CD4-positive, alpha-beta T cell (primary cell): ENCODE measurements at regions of chr2 and their contacts with region 1.

Region 1: DNA sequence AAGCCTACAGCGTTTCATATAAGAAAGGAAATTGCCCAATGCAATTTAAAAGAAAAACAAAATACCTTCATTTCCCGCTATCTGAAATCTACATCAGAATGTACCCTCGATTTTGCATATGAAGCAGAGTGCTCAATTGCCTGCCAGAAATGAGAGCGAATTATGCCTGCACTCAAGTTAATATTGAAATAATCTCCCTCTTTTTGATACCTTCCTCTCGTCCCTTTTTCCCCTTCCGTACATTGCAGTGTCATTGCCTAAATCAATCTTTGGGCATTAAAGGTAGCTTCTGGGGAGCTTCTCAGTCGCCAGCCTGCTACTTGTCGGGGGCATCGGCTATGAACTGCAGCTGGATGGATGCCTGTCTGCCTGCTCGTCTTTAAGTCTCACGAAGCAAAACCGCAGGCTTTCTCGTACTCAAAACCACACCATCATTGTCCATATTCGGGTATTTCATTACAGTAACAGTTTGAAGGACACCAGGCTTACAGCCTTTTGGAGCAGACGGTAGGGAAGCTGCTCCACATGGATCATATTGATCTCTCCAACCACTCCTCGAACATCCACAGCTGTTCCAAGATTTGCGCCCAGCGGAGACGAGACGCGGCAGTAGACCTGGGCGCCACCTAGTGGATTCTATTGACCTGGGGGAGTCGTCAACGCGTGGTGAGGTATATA is 64.0 kb upstream of the HNRNPA3 start:
- DNase-seq: peak; percentile 50 to 84 (median 62)
- ATAC-seq: peak; percentile 89
- H3K4me3 ChIP-seq: peak overlapping the region; percentile 56
- H3K4me3 Mint-ChIP-seq: peak overlapping the region; percentile 83
- H3K27ac ChIP-seq: no peak overlapping the region
- H3K27ac Mint-ChIP-seq: peak overlapping the region; percentile 8
- H3K4me1 ChIP-seq: peaks cover 8% of the 10 kb centered on the region
- H3K4me1 Mint-ChIP-seq: peaks cover 13% of the 10 kb centered on the region
- H3K27me3 ChIP-seq: peaks cover 4 to 25% of the 10 kb centered on the region in 2 experiments
- H3K27me3 Mint-ChIP-seq: peaks cover 49% of the 10 kb centered on the region
- CTCF ChIP-seq: peak; percentile 99

Region 2: GRCh38 chr2:176454893-176455811 is 693.5 kb before region 1 on chr2:
- CTCF ChIA-PET with region 1: no interaction called
- POLR2A ChIA-PET with region 1: no interaction called
- intact Hi-C with region 1: loop called (anchors 10 kb)
- DNase-seq: peak; percentile 54 to 85 (median 72)
- ATAC-seq: peak; percentile 76
- H3K4me3 ChIP-seq: no peak overlapping the region
- H3K4me3 Mint-ChIP-seq: no peak overlapping the region
- H3K27ac ChIP-seq: no peak overlapping the region
- H3K27ac Mint-ChIP-seq: no peak overlapping the region
- H3K4me1 ChIP-seq: no peaks in the 10 kb centered on the region
- H3K4me1 Mint-ChIP-seq: no peaks in the 10 kb centered on the region
- H3K27me3 ChIP-seq: peaks cover 9 to 47% of the 10 kb centered on the region in 2 experiments
- H3K27me3 Mint-ChIP-seq: peaks cover 67% of the 10 kb centered on the region
- CTCF ChIP-seq: peak; percentile 84

Region 3: GRCh38 chr2:176638167-176639015 is 510.2 kb before region 1 on chr2:
- CTCF ChIA-PET with region 1: no interaction called
- POLR2A ChIA-PET with region 1: no interaction called
- intact Hi-C with region 1: loop called in 1 of 2 experiments (anchors 5 kb)
- DNase-seq: peak; percentile 19 to 71 (median 45)
- ATAC-seq: peak; percentile 80
- H3K4me3 ChIP-seq: peak overlapping the region; percentile 42
- H3K4me3 Mint-ChIP-seq: peak overlapping the region; percentile 62
- H3K27ac ChIP-seq: no peak overlapping the region
- H3K27ac Mint-ChIP-seq: no peak overlapping the region
- H3K4me1 ChIP-seq: peaks cover 10% of the 10 kb centered on the region
- H3K4me1 Mint-ChIP-seq: peaks cover 8% of the 10 kb centered on the region
- H3K27me3 ChIP-seq: peaks cover 26 to 79% of the 10 kb centered on the region in 2 experiments
- H3K27me3 Mint-ChIP-seq: peaks cover 81% of the 10 kb centered on the region
- CTCF ChIP-seq: peak; percentile 41

Region 4: DNA sequence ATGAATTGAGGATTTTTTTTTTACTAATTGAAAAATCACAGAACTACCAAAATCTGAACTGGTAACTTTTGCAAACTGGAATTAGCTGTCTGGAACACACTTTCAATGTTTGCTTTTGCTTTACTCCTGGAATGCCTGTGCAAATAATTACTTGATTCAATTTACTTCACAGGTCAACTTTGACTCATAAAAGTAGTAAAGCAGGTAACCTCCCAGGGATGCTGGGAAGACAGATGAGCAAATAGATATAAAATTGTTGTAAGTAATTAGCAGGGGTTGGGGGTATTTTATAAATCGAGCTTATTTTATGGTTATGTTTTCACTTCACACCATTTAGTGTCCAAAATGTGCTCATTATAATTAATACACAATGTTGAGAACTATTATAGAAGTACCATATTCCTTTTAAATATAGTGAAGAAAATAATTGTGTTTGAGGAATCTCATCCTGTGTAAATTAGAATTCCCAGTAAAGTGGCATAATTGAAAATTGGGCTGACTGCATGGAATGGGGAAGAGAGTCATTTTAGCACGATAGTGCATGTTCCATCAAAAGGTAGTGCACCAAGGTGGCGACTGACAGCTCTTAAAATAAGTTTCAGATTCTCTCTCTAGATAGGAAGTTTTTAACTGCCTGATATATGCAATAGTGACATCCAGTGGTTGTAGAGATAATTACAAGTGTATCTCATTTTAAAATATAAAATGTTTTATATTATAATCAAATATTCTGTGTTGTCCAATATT is 334.1 kb before region 1 on chr2:
- CTCF ChIA-PET with region 1: interaction called, 4 read pairs
- POLR2A ChIA-PET with region 1: no interaction called
- intact Hi-C with region 1: loop called in 1 of 2 experiments (anchors 5 kb)
- DNase-seq: peak in 4 of 14 experiments; percentile 6 to 52 (median 48)
- ATAC-seq: peak; percentile 67
- H3K4me3 ChIP-seq: no peak overlapping the region
- H3K4me3 Mint-ChIP-seq: no peak overlapping the region
- H3K27ac ChIP-seq: no peak overlapping the region
- H3K27ac Mint-ChIP-seq: no peak overlapping the region
- H3K4me1 ChIP-seq: peaks cover 3% of the 10 kb centered on the region
- H3K4me1 Mint-ChIP-seq: peaks cover 19% of the 10 kb centered on the region
- H3K27me3 ChIP-seq: no peaks in the 10 kb centered on the region
- H3K27me3 Mint-ChIP-seq: no peaks in the 10 kb centered on the region
- CTCF ChIP-seq: peak; percentile 69

Region 5: DNA sequence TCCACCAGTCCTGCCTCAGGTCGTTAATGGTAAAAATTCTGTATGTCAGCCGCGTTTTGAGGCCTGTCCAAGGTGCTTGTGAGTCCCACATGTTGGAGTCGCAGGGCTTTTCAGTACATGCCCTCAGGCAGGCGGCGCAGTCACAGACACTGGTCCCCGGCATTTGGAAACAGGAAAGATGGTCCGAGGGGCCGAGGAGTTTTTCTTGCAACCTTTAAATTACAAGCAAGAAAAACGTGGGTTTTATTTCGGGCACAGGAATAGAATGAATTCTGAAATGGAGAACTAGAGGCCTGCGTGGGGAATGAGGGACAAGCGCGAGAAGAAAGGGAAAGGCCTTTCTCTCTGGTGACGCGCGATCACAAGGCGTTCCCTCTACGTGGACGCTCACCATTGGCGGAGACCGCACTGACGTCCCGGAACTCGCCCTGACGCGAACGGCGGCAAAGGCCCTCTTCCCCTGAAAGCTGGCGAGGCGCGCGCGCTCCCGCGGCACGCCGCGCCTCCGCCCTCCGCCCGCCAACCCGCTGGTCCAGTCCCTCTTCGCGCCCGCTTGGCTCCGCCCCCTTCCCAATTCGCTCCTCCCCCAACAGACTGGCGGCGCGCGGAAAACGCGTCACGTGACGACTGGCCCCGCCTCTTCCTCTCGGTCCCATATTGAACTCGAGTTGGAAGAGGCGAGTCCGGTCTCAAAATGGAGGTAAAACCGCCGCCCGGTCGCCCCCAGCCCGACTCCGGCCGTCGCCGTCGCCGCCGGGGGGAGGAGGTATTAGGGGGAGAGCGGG is 63.7 kb after region 1 on chr2 and contains the start of gene HNRNPA3:
- CTCF ChIA-PET with region 1: interaction called, 3 read pairs
- POLR2A ChIA-PET with region 1: interaction called, 10 read pairs
- intact Hi-C with region 1: no loop called
- DNase-seq: peak; percentile 99 to 100 (median 100)
- ATAC-seq: peak; percentile 81
- H3K4me3 ChIP-seq: peak within 1 kb of the TSS; percentile 86
- H3K4me3 Mint-ChIP-seq: peak within 1 kb of the TSS; percentile 88
- H3K27ac ChIP-seq: peak within 1 kb of the TSS; percentile 98 to 100
- H3K27ac Mint-ChIP-seq: peak within 1 kb of the TSS; percentile 99
- H3K4me1 ChIP-seq: peaks cover 37% of the 10 kb centered on the region
- H3K4me1 Mint-ChIP-seq: peaks cover 61% of the 10 kb centered on the region
- H3K27me3 ChIP-seq: no peaks in the 10 kb centered on the region
- H3K27me3 Mint-ChIP-seq: no peaks in the 10 kb centered on the region
- CTCF ChIP-seq: peak; percentile 33
- total RNA-seq, gene HNRNPA3: 162 to 167 TPM

Region 6: GRCh38 chr2:177419274-177419673 is 270.7 kb after region 1 on chr2:
- CTCF ChIA-PET with region 1: interaction called, 9 read pairs
- POLR2A ChIA-PET with region 1: no interaction called
- intact Hi-C with region 1: loop called in 1 of 2 experiments (anchors 5 kb)
- DNase-seq: no peak
- ATAC-seq: no peak
- H3K4me3 ChIP-seq: no peak overlapping the region
- H3K4me3 Mint-ChIP-seq: no peak overlapping the region
- H3K27ac ChIP-seq: no peak overlapping the region
- H3K27ac Mint-ChIP-seq: no peak overlapping the region
- H3K4me1 ChIP-seq: no peaks in the 10 kb centered on the region
- H3K4me1 Mint-ChIP-seq: peaks cover 29% of the 10 kb centered on the region
- H3K27me3 ChIP-seq: no peaks in the 10 kb centered on the region
- H3K27me3 Mint-ChIP-seq: no peaks in the 10 kb centered on the region
- CTCF ChIP-seq: no peak

Region 7: GRCh38 chr2:177520356-177520723 is 371.7 kb after region 1 on chr2:
- CTCF ChIA-PET with region 1: no interaction called
- POLR2A ChIA-PET with region 1: no interaction called
- intact Hi-C with region 1: no loop called
- DNase-seq: no peak
- ATAC-seq: no peak
- H3K4me3 ChIP-seq: no peak overlapping the region
- H3K4me3 Mint-ChIP-seq: no peak overlapping the region
- H3K27ac ChIP-seq: no peak overlapping the region
- H3K27ac Mint-ChIP-seq: no peak overlapping the region
- H3K4me1 ChIP-seq: no peaks in the 10 kb centered on the region
- H3K4me1 Mint-ChIP-seq: no peaks in the 10 kb centered on the region
- H3K27me3 ChIP-seq: no peaks in the 10 kb centered on the region
- H3K27me3 Mint-ChIP-seq: no peaks in the 10 kb centered on the region
- CTCF ChIP-seq: no peak

Region 8: GRCh38 chr2:178536037-178536436 is 1387.4 kb after region 1 on chr2:
- CTCF ChIA-PET with region 1: no interaction called
- POLR2A ChIA-PET with region 1: no interaction called
- intact Hi-C with region 1: no loop called
- DNase-seq: no peak
- ATAC-seq: no peak
- H3K4me3 ChIP-seq: no peak overlapping the region
- H3K4me3 Mint-ChIP-seq: no peak overlapping the region
- H3K27ac ChIP-seq: no peak overlapping the region
- H3K27ac Mint-ChIP-seq: no peak overlapping the region
- H3K4me1 ChIP-seq: no peaks in the 10 kb centered on the region
- H3K4me1 Mint-ChIP-seq: peaks cover 3% of the 10 kb centered on the region
- H3K27me3 ChIP-seq: no peaks in the 10 kb centered on the region
- H3K27me3 Mint-ChIP-seq: no peaks in the 10 kb centered on the region
- CTCF ChIP-seq: no peak